Naive thymus-derived CD8-positive, alpha-beta T cell (primary cell): ENCODE measurements at regions of chr18 and their contacts with region 1.

Region 1: DNA sequence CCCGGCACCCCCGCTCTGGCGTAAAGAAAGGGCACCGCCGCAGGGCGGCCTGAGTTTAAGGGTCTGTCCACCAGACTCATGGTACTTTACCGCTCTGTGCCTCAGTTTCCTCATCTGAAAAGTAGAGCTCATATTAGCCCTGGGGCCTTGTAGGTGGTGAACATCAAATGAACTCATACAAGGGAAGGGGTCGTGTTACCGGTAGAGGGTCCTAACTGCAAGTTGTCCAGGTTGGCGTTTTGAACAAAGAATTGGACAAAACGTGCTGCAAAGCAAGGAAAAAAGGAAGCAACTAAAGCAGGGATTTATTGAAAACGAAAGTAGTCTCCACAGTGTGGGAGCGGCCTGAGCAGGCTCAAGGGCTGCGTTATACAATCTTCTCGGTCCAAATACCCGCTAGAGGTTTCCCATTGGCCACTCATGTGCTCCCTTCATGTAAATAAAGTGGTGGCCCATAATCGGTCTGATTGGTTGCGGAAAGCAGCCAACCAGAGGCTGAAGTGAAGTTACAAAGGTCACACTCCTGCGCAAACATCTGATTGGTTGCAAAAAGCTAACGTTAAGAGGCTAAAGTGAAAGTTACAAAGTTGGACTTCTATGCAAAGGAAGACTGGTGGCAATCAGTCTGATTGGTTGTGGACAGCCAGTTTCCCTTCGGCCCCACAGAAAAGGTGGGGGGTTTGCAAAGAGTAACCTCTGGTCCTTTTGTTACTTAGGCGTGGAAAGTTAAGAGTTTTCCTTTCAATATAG is 80.7 kb upstream of the LDLRAD4 start:
- DNase-seq: peak; percentile 28 to 91 (median 75)
- ATAC-seq: peak; percentile 81
- H3K4me3 Mint-ChIP-seq: peak overlapping the region; percentile 92 to 100 (median 98)
- H3K27ac Mint-ChIP-seq: peak overlapping the region; percentile 93 to 100 (median 99)
- H3K4me1 Mint-ChIP-seq: peaks cover 12 to 30% (median 26%) of the 10 kb centered on the region in 4 donors
- H3K27me3 Mint-ChIP-seq: no peaks in the 10 kb centered on the region

Region 2: DNA sequence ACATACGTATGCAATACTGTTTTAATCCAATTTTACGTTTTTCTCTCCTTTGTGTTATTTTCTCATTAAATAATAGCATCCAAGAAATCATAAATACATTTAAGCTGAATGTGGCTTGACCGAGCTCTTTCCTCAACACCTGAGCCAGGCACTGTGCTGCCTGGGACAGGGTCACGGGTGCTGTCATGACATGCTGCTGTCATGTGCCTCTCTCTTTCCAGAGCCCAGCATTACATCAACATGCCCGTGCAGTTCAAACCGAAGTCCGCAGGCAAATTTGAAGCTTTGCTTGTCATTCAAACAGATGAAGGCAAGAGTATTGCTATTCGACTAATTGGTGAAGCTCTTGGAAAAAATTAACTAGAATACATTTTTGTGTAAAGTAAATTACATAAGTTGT is 13.4 kb before region 1 on chr18:
- POLR2A ChIA-PET with region 1: interaction called, 11 read pairs
- DNase-seq: no peak
- ATAC-seq: no peak
- H3K4me3 Mint-ChIP-seq: no peak overlapping the region
- H3K27ac Mint-ChIP-seq: peak overlapping the region in 1 of 10 donors; percentile 71
- H3K4me1 Mint-ChIP-seq: peaks cover 0 to 5% (median 2%) of the 10 kb centered on the region in 4 donors
- H3K27me3 Mint-ChIP-seq: no peaks in the 10 kb centered on the region

Region 3: GRCh38 chr18:13159579-13159978 is 21.7 kb after region 1 on chr18:
- POLR2A ChIA-PET with region 1: interaction called, 10 read pairs
- DNase-seq: peak in 8 of 10 donors; percentile 33 to 71 (median 59)
- ATAC-seq: peak; percentile 41 to 44
- H3K4me3 Mint-ChIP-seq: peak overlapping the region in 4 of 10 donors; percentile 5 to 45 (median 28)
- H3K27ac Mint-ChIP-seq: peak overlapping the region in 1 of 10 donors; percentile 17
- H3K4me1 Mint-ChIP-seq: peaks cover 2 to 7% (median 2%) of the 10 kb centered on the region in 4 donors
- H3K27me3 Mint-ChIP-seq: no peaks in the 10 kb centered on the region